Endothelial cell of umbilical vein (primary cell): ENCODE measurements at regions of chr18 and their contacts with region 1.

Region 1: DNA sequence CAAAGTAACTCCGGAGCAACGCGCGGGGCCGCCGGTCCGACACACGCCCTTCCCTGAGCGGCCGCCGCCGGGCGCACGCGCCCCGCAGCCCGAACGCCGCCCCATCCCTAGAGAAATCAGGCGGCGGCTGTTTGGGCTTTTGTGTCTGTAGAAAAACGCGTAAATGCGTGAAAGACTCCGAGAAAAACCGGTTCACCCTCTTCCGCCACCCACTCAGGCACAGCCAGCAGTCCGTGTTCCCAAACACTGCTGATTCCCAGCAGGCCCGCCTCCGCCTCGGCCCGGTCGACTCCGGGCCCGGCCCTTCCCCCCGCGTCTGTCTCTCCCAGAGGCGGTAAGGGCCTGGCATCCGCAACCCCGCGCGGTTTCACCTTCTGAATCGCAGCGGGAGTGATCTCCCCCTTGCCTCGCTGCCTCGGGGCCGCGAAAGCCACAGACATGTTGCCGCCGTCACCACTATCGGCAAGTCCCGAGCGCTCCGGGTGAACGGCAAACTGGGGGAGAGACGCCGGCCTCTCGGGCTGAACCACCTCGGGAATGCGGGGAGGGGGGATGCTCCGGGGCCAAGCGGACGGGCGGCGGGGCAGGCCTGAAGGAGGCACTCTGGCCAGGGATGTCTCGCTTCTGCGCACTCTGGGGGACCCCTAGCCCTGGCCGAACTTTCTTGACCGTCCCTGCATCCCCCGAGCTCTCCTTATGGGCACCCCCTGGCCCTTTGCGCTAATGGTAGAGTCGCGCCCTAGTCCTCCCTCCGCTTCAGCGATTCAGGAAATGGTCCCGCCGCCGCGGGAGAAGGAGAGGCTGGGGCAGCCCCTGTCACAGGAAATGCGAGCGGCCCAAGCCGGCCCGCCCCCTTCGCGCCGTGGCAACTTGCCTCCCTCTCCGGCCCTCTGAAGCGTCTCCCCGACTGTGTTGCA is at the start of gene SS18:
- DNase-seq: peak; percentile 92
- H3K4me3 ChIP-seq: peak within 1 kb of the TSS; percentile 91 to 98 (median 91)
- H3K27ac ChIP-seq: peak within 1 kb of the TSS; percentile 99
- H3K4me1 ChIP-seq: peaks cover 18% of the 10 kb centered on the region
- H3K27me3 ChIP-seq: no peaks in the 10 kb centered on the region
- CTCF ChIP-seq: no peak
- POLR2A ChIP-seq: peak; percentile 86
- total RNA-seq, gene SS18: 68.4 TPM in 2 replicates

Region 2: DNA sequence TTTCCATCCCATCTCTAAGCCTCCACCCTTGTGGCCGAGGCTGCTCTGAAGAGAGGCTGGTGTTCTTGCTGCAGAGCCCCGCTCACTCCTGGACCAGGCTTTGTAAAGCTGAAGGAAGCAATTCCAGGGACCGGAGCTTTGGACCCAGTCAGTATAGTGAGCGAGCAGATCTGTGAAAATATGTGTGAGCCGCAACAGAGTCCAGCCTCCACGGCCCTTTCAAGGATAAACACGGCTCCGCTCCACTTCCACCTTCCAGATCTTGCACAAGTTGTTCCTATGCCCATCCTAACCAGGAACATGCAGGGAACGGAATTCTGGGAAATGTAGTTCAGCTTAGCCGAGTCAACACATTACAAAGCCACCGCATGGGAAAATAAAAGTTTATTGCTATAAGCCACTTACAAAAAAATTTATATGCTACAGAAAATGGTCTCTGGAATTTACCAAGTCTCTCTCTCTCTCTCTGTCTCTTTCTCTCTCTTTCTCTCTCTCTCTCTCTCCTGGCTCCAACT is 586.8 kb before region 1 on chr18:
- CTCF ChIA-PET with region 1: no interaction called
- POLR2A ChIA-PET with region 1: no interaction called
- dilution Hi-C with region 1: no loop called
- intact Hi-C with region 1: no loop called
- DNase-seq: peak; percentile 85
- H3K4me3 ChIP-seq: peak overlapping the region; percentile 27 to 77 (median 65)
- H3K27ac ChIP-seq: no peak overlapping the region
- H3K4me1 ChIP-seq: peaks cover 10% of the 10 kb centered on the region
- H3K27me3 ChIP-seq: no peaks in the 10 kb centered on the region
- CTCF ChIP-seq: no peak
- POLR2A ChIP-seq: no peak

Region 3: GRCh38 chr18:26022585-26022984 is 67.8 kb before region 1 on chr18:
- CTCF ChIA-PET with region 1: no interaction called
- POLR2A ChIA-PET with region 1: no interaction called
- dilution Hi-C with region 1: no loop called
- intact Hi-C with region 1: no loop called
- DNase-seq: no peak
- H3K4me3 ChIP-seq: no peak overlapping the region
- H3K27ac ChIP-seq: no peak overlapping the region
- H3K4me1 ChIP-seq: no peaks in the 10 kb centered on the region
- H3K27me3 ChIP-seq: no peaks in the 10 kb centered on the region
- CTCF ChIP-seq: no peak
- POLR2A ChIP-seq: no peak

Region 4: GRCh38 chr18:26034850-26035497 is 55.4 kb before region 1 on chr18:
- CTCF ChIA-PET with region 1: no interaction called
- POLR2A ChIA-PET with region 1: no interaction called
- dilution Hi-C with region 1: no loop called
- intact Hi-C with region 1: loop called (anchors 10 kb)
- DNase-seq: no peak
- H3K4me3 ChIP-seq: no peak overlapping the region
- H3K27ac ChIP-seq: no peak overlapping the region
- H3K4me1 ChIP-seq: peaks cover 2% of the 10 kb centered on the region
- H3K27me3 ChIP-seq: no peaks in the 10 kb centered on the region
- CTCF ChIP-seq: no peak
- POLR2A ChIP-seq: no peak

Region 5: GRCh38 chr18:26051843-26052242 is 38.5 kb before region 1 on chr18:
- CTCF ChIA-PET with region 1: interaction called, 3 read pairs
- POLR2A ChIA-PET with region 1: no interaction called
- dilution Hi-C with region 1: no loop called
- intact Hi-C with region 1: loop called (anchors 5 kb)
- DNase-seq: peak; percentile 34
- H3K4me3 ChIP-seq: no peak overlapping the region
- H3K27ac ChIP-seq: no peak overlapping the region
- H3K4me1 ChIP-seq: no peaks in the 10 kb centered on the region
- H3K27me3 ChIP-seq: no peaks in the 10 kb centered on the region
- CTCF ChIP-seq: no peak
- POLR2A ChIP-seq: no peak

Region 6: GRCh38 chr18:26059357-26059756 is 31.0 kb before region 1 on chr18:
- CTCF ChIA-PET with region 1: interaction called, 3 read pairs
- POLR2A ChIA-PET with region 1: no interaction called
- dilution Hi-C with region 1: no loop called
- intact Hi-C with region 1: loop called (anchors 2 kb)
- DNase-seq: no peak
- H3K4me3 ChIP-seq: no peak overlapping the region
- H3K27ac ChIP-seq: no peak overlapping the region
- H3K4me1 ChIP-seq: no peaks in the 10 kb centered on the region
- H3K27me3 ChIP-seq: no peaks in the 10 kb centered on the region
- CTCF ChIP-seq: no peak
- POLR2A ChIP-seq: no peak

Region 7: GRCh38 chr18:26159353-26159752 is 69.0 kb after region 1 on chr18:
- CTCF ChIA-PET with region 1: interaction called, 5 read pairs
- POLR2A ChIA-PET with region 1: no interaction called
- dilution Hi-C with region 1: no loop called
- intact Hi-C with region 1: loop called (anchors 2 kb)
- DNase-seq: peak; percentile 6
- H3K4me3 ChIP-seq: no peak overlapping the region
- H3K27ac ChIP-seq: no peak overlapping the region
- H3K4me1 ChIP-seq: no peaks in the 10 kb centered on the region
- H3K27me3 ChIP-seq: peaks cover 0 to 3% of the 10 kb centered on the region in 2 experiments
- CTCF ChIP-seq: no peak
- POLR2A ChIP-seq: no peak

Region 8: DNA sequence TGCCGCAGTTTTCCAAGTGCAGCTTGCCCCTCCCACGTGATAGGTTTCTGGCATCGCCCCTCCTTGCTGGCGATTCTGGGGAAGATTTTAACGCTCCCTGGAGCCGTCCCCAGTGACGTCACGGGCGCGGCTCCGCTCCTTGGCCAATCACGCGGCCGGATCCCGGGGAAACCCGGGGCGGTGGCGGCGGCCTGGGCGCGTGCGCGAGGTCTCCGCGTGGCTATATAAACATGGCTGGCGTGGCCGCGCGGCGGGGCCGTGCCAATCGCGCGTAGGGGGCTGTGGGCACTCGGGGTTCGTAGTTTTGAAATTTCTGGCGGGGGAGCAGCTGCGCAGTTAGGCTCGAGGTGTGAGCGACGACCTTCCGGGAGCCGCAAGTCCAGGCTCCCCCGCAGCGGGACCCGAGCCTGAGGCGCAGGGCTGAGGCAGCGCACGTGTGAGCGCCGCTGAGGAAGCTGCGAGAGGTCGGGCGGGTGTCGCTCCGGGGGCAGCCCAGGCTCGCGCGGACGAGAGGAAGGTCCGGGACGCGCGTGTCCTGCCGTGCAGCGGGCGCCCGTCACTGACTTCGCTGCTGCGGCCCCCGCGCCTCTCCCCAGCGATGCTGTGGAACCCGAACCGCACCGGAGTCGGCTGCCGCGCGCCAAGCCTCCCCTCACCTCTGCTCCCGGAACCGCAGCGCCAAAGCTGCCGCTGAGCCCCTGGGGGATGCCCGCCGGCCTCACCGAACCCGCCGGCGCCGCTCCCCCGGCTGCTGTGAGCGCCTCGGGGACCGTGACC is 136.0 kb after region 1 on chr18 and contains the start of gene TAF4B:
- CTCF ChIA-PET with region 1: no interaction called
- POLR2A ChIA-PET with region 1: no interaction called
- dilution Hi-C with region 1: no loop called
- intact Hi-C with region 1: loop called (anchors 2 kb)
- DNase-seq: peak; percentile 93
- H3K4me3 ChIP-seq: peak within 1 kb of the TSS; percentile 70 to 85 (median 75)
- H3K27ac ChIP-seq: peak within 1 kb of the TSS; percentile 28
- H3K4me1 ChIP-seq: peaks cover 11% of the 10 kb centered on the region
- H3K27me3 ChIP-seq: peaks cover 6 to 13% of the 10 kb centered on the region in 2 experiments
- CTCF ChIP-seq: no peak
- POLR2A ChIP-seq: no peak
- total RNA-seq, gene TAF4B: 1.2 and 2.0 TPM in 2 replicates

Region 9: GRCh38 chr18:26650310-26651268 is 560.2 kb after region 1 on chr18:
- CTCF ChIA-PET with region 1: no interaction called
- POLR2A ChIA-PET with region 1: no interaction called
- dilution Hi-C with region 1: no loop called
- intact Hi-C with region 1: loop called (anchors 5 kb)
- DNase-seq: no peak
- H3K4me3 ChIP-seq: no peak overlapping the region
- H3K27ac ChIP-seq: no peak overlapping the region
- H3K4me1 ChIP-seq: no peaks in the 10 kb centered on the region
- H3K27me3 ChIP-seq: peaks cover 40 to 51% of the 10 kb centered on the region in 2 experiments
- CTCF ChIP-seq: no peak
- POLR2A ChIP-seq: no peak